Mammary epithelial cell (primary cell): ENCODE measurements at regions of chr13 and their contacts with region 1.

Region 1: DNA sequence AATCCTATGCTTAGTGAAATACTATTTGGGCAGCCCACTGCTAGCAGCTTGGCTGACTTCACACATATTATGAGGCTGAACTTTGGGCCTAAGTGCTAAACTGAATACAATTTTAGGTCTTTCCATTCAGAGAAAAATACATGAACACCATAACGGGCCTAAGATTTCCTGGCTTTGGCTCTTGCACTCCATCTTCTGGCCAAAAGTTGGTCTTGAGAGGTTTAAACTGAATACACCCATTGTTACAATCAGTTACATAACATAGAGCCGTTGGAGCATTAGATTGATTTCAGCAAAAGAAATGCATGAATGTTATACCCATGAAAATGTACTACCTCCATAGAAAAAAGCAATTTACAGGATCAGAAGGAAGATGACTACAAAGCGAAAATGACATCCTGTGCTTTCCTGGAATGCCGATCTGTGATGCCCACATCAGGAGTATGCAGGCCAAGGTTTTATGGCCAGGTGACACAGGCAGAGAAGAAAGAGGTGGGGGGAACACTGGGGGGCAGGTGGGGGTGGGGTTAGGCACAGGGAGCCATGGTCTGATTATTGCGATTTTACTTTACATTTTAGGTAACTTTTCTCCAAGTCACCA is 11.1 kb upstream of the SHISA2 start:
- DNase-seq: peak; percentile 53
- H3K4me3 ChIP-seq: no peak overlapping the region
- H3K27ac ChIP-seq: no peak overlapping the region
- H3K4me1 ChIP-seq: no peaks in the 10 kb centered on the region
- H3K27me3 ChIP-seq: peaks cover 1% of the 10 kb centered on the region
- CTCF ChIP-seq: peak; percentile 85

Region 2: DNA sequence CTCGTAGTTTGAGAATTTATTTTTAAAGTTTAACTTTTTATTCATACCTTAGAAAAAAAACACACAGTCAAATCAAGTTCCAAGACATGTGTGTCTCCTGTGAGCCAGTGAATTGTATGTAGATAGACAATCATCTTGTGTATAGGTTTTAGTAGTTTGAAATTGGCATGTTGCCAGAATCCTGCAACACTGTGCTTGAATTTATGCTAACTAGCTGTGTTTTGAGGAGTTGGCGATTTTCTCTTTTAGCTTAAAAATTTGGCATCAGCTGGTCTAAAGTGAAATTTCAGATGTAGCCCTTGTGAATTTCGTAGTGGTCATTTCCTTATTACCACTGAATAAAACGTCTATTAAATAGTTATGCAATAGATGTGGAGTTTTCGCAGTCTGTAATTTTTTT is 477.9 kb before region 1 on chr13:
- CTCF ChIA-PET with region 1: no interaction called
- dilution Hi-C with region 1: loop called (anchors 5 kb)
- in situ Hi-C with region 1: no loop called
- intact Hi-C with region 1: no loop called
- DNase-seq: no peak
- H3K4me3 ChIP-seq: no peak overlapping the region
- H3K27ac ChIP-seq: no peak overlapping the region
- H3K4me1 ChIP-seq: no peaks in the 10 kb centered on the region
- H3K27me3 ChIP-seq: no peaks in the 10 kb centered on the region
- CTCF ChIP-seq: no peak

Region 3: DNA sequence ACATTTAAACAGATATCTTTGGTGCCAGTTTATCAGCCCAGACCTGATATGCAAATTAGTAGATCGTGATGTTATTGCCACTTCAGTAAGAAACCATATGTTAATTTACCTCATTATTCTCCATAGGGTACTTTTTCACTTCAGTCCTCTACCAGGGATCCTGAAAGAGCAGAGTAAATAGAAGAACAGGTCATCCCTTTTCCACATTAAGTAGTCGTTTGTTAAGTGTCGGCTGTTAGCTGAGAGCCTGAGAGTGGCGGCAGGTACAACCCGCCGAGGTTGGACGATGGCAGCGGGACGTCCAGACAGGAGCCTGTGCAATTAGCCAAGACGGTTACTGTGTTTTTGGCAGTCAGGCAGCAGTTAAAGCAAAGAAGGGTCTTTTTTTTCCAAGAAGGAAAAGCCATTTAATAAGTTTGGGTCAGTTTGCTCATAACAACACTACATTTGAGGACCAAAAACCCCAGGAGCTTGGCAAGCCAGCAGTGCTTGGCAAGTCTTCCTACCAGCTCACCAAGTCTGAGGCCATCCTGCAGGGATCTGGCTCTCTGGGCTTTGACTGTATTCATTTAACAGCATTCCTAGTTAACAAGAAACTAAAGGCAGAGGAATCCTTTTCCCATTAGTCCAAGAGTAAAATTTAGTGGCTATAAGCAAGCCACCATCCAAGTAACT is 243.0 kb before region 1 on chr13:
- CTCF ChIA-PET with region 1: no interaction called
- dilution Hi-C with region 1: no loop called
- in situ Hi-C with region 1: loop called (anchors 5 to 10 kb)
- intact Hi-C with region 1: no loop called
- DNase-seq: no peak
- H3K4me3 ChIP-seq: no peak overlapping the region
- H3K27ac ChIP-seq: no peak overlapping the region
- H3K4me1 ChIP-seq: no peaks in the 10 kb centered on the region
- H3K27me3 ChIP-seq: peaks cover 2% of the 10 kb centered on the region
- CTCF ChIP-seq: no peak

Region 4: DNA sequence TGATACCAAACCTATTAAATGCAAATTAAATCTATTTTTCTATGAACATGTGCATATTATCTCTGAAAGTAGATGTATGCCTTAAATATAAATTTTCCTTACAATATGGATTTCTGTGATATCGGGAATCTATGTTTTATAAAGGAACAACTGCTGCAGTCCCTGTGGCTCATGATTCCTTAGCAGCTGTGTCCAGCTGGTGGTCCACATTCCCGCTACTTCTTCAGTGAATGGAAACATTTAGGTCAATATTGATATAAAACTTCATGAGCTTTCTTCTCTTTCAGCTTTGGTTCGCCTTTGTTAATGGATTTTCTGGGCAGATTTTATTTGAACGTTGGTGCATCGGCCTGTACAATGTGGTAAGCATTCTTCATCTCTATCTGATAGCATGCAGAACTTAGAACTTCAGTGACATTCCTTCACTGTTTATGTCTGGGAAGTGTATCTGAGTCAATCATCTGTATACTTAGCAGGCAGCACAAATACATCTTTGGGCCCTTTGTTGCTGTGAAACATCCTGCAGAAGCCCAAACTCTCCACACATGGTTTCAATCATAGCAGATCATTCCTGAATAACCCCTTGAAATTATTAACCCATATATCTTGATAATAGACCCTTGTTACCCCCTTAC is 235.0 kb before region 1 on chr13:
- CTCF ChIA-PET with region 1: interaction called, 5 read pairs
- dilution Hi-C with region 1: no loop called
- in situ Hi-C with region 1: loop called (anchors 5 to 10 kb)
- intact Hi-C with region 1: loop called (anchors 1 kb)
- DNase-seq: no peak
- H3K4me3 ChIP-seq: no peak overlapping the region
- H3K27ac ChIP-seq: no peak overlapping the region
- H3K4me1 ChIP-seq: no peaks in the 10 kb centered on the region
- H3K27me3 ChIP-seq: no peaks in the 10 kb centered on the region
- CTCF ChIP-seq: no peak